ENCODE measurements at regions of chr5 and their contacts with region 1.

Region 1: GRCh38 chr5:95646554-95647431 is at the start of gene RFESD:
- DNase-seq: peak; percentile 98
- H3K4me3 Mint-ChIP-seq: peak within 1 kb of the TSS; percentile 78
- H3K27ac Mint-ChIP-seq: peak within 1 kb of the TSS; percentile 89
- H3K4me1 Mint-ChIP-seq: peaks cover 25% of the 10 kb centered on the region
- H3K27me3 Mint-ChIP-seq: no peaks in the 10 kb centered on the region
- total RNA-seq, gene RFESD: 6.9 to 8.8 TPM

Region 2: GRCh38 chr5:94830520-94830919 is 816.3 kb before region 1 on chr5:
- CTCF ChIA-PET with region 1: no interaction called
- POLR2A ChIA-PET with region 1: no interaction called
- intact Hi-C with region 1: no loop called
- DNase-seq: no peak
- H3K4me3 Mint-ChIP-seq: no peak overlapping the region
- H3K27ac Mint-ChIP-seq: no peak overlapping the region
- H3K4me1 Mint-ChIP-seq: no peaks in the 10 kb centered on the region
- H3K27me3 Mint-ChIP-seq: peaks cover 25% of the 10 kb centered on the region

Region 3: DNA sequence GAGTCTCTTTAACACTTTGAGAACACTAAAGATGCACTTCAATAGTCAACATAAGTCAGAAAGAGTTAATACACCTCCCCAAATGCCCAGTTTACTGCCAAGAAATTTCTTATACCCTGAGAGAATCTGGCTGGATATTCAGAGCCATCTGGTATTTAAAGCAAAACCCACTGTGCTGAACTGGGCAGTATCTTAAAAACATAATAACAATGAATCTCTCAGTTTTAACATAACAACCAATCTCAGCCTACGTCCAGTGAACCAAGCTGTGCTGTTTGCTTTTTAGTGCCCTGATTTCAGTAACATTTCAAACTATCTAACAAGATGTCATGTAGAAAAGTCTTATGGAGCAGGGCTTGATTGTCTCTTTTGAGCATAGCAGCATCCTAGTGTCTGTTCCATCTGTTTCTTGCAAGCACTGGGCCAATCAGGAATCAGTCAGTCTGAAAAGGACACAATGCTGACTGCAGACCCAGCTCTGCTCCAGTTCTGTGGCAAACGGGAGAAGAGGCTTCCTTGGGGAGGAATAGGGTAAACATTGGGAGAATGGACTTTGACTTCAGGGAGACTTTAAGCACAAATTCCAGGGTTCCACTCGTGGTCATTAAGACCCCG is 299.2 kb before region 1 on chr5:
- CTCF ChIA-PET with region 1: no interaction called
- POLR2A ChIA-PET with region 1: no interaction called
- intact Hi-C with region 1: no loop called
- DNase-seq: no peak
- H3K4me3 Mint-ChIP-seq: no peak overlapping the region
- H3K27ac Mint-ChIP-seq: no peak overlapping the region
- H3K4me1 Mint-ChIP-seq: no peaks in the 10 kb centered on the region
- H3K27me3 Mint-ChIP-seq: no peaks in the 10 kb centered on the region

Region 4: GRCh38 chr5:95620030-95620869 is 26.5 kb before region 1 on chr5 and contains the start of gene GPR150:
- CTCF ChIA-PET with region 1: interaction called, 10 read pairs
- POLR2A ChIA-PET with region 1: interaction called, 7 read pairs
- intact Hi-C with region 1: loop called (anchors 1 kb)
- DNase-seq: peak; percentile 78
- H3K4me3 Mint-ChIP-seq: peak within 1 kb of the TSS; percentile 80
- H3K27ac Mint-ChIP-seq: peak within 1 kb of the TSS; percentile 66
- H3K4me1 Mint-ChIP-seq: peaks cover 55% of the 10 kb centered on the region
- H3K27me3 Mint-ChIP-seq: no peaks in the 10 kb centered on the region
- total RNA-seq, gene GPR150: 0.50 to 0.82 TPM

Region 5: GRCh38 chr5:95718203-95718602 is 71.4 kb after region 1 on chr5:
- CTCF ChIA-PET with region 1: no interaction called
- POLR2A ChIA-PET with region 1: no interaction called
- intact Hi-C with region 1: loop called (anchors 2 kb)
- DNase-seq: peak; percentile 35
- H3K4me3 Mint-ChIP-seq: no peak overlapping the region
- H3K27ac Mint-ChIP-seq: no peak overlapping the region
- H3K4me1 Mint-ChIP-seq: peaks cover 16% of the 10 kb centered on the region
- H3K27me3 Mint-ChIP-seq: peaks cover 7% of the 10 kb centered on the region

Region 6: GRCh38 chr5:95822542-95823181 is 175.9 kb after region 1 on chr5 and contains the start of gene GLRX:
- CTCF ChIA-PET with region 1: interaction called, 8 read pairs
- POLR2A ChIA-PET with region 1: interaction called, 4 read pairs
- intact Hi-C with region 1: loop called (anchors 1 kb)
- DNase-seq: peak; percentile 61
- H3K4me3 Mint-ChIP-seq: peak within 1 kb of the TSS; percentile 94
- H3K27ac Mint-ChIP-seq: peak within 1 kb of the TSS; percentile 90
- H3K4me1 Mint-ChIP-seq: peaks cover 65% of the 10 kb centered on the region
- H3K27me3 Mint-ChIP-seq: no peaks in the 10 kb centered on the region
- total RNA-seq, gene GLRX: 33.2 to 34.0 TPM

Region 7: GRCh38 chr5:96279801-96280542 is 633.2 kb after region 1 on chr5:
- CTCF ChIA-PET with region 1: no interaction called
- POLR2A ChIA-PET with region 1: no interaction called
- intact Hi-C with region 1: loop called (anchors 5 kb)
- DNase-seq: peak; percentile 51
- H3K4me3 Mint-ChIP-seq: peak overlapping the region; percentile 7
- H3K27ac Mint-ChIP-seq: peak overlapping the region; percentile 31
- H3K4me1 Mint-ChIP-seq: peaks cover 26% of the 10 kb centered on the region
- H3K27me3 Mint-ChIP-seq: peaks cover 29% of the 10 kb centered on the region

Region 8: DNA sequence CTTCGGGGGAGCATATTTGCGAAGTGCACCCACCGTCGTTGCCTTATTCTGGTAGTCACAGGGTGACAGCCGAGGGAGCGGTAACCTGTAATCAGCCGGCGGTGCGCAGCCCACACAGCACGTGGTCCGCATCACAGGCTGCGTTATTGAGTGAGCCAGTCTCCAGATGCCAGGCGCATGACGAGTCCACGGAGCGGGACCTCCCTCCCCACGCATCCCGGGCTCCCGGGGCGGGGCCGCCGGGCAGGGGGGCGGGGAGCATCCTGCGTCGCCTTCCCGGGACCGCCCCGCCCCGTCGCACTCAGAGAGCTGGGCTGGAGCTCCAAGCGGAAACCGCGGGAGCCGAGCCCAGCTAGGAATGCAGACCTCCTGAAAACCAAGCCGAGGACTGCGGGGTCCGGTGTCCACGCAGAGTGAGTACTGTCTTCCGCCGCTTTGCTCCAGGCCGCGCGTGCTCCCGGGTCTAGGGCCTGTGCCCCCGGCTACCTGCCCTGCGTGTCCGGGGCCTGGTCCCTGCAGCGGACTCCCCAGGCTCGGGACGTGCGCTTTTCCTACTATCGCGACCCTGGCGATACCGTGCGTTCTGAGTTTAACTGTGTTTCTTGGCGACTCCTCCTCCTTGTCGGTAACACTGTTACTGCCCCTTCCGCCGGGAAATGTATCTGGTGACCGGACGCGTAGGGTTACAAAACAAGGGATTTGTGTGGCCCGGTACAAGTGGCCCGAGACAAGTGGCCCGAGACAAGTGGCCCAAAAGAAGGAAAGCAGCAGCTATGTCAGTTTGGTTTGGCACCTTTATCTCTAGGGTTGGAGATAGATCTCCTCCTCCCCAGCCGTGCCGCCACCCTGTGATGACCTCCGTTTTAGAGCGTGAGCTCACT is 1056.0 kb after region 1 on chr5:
- CTCF ChIA-PET with region 1: no interaction called
- POLR2A ChIA-PET with region 1: interaction called, 5 read pairs
- intact Hi-C with region 1: loop called (anchors 5 kb)
- DNase-seq: peak; percentile 92
- H3K4me3 Mint-ChIP-seq: peak overlapping the region; percentile 84
- H3K27ac Mint-ChIP-seq: peak overlapping the region; percentile 85
- H3K4me1 Mint-ChIP-seq: peaks cover 52% of the 10 kb centered on the region
- H3K27me3 Mint-ChIP-seq: no peaks in the 10 kb centered on the region